Posterior cingulate gyrus (tissue), 11 donors: ENCODE measurements at regions of chr18 and their contacts with region 1.

Region 1: GRCh38 chr18:49250816-49251388 is 209.5 kb downstream of the DYM start:
- DNase-seq: peak in 1 of 10 donors; percentile 16

Region 2: DNA sequence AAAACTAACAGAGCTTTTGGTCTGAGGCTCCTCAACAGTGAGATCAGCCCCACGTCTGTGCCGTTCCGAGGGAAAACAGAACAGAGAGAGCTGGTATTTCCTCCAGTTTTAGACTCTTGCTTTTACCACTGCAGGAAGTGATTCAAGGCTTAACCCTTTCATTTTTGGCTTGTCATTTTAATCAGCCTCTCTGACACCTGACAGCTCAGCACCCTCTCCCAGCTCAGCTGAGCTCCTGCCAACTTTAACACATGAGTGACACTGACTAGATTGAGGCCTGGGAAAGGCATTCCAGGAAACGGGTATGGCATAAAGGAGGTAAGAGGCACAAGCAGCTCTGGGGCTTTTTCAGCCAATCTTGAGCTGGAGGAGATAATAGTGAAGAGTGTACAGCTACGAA is 1760.0 kb before region 1 on chr18:
- intact Hi-C with region 1: no loop called
- DNase-seq: no peak

Region 3: DNA sequence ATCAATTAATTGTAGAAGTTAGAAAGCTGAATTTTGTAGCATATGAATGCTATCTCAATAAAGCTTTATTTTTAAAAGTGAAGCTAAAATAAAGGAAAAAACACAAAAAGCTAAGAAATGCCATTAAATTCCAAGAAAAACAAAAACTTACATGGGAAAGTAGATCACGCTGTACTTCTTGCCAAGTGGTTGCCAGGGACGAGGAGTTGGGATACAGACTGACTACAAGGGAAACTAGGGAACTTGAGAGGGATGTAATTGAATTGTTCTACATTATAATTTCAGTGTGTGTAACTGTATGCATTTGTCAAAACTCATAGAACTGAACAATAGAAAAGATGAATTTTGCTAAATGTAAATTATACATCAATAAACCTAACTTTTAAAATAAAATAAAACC is 101.4 kb after region 1 on chr18:
- intact Hi-C with region 1: no loop called
- DNase-seq: no peak

Region 4: DNA sequence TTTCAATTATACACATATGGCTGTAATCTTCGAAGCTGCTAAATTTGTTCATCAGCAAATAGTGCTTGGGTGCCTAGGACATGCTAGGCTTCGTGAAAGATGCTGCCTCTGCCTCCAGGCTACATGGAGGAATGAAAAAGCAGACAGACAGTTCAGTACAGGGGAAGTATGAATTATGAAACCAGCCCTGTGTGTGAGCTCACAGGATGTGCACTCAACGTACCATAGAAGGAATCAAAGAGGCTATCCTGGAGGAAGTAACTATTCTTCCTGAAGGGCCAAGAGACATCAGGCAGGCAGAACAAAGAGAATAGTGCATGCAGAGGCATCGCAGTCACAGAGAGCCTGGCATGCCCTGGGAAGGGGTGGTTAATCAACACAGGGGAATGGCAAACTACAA is 148.1 kb after region 1 on chr18:
- intact Hi-C with region 1: loop called (anchors 5 kb)
- DNase-seq: no peak

Region 5: GRCh38 chr18:49412679-49413078 is 161.8 kb after region 1 on chr18:
- intact Hi-C with region 1: loop called (anchors 1 kb)
- DNase-seq: no peak